ENCODE measurements at regions of chr18 and their contacts with region 1.

Region 1: GRCh38 chr18:286515-287310 is 18.9 kb upstream of the THOC1 start:
- DNase-seq: no peak
- H3K4me3 ChIP-seq: no peak overlapping the region
- H3K27ac ChIP-seq: no peak overlapping the region
- H3K4me1 ChIP-seq: no peaks in the 10 kb centered on the region
- H3K27me3 ChIP-seq: peaks cover 17% of the 10 kb centered on the region
- CTCF ChIP-seq: peak; percentile 69

Region 2: GRCh38 chr18:415617-416612 is 129.2 kb after region 1 on chr18:
- intact Hi-C with region 1: no loop called
- DNase-seq: no peak
- H3K4me3 ChIP-seq: no peak overlapping the region
- H3K27ac ChIP-seq: no peak overlapping the region
- H3K4me1 ChIP-seq: peaks cover 9% of the 10 kb centered on the region
- H3K27me3 ChIP-seq: no peaks in the 10 kb centered on the region
- CTCF ChIP-seq: no peak

Region 3: GRCh38 chr18:616380-616995 is 329.8 kb after region 1 on chr18:
- intact Hi-C with region 1: loop called (anchors 5 kb)
- DNase-seq: no peak
- H3K4me3 ChIP-seq: no peak overlapping the region
- H3K27ac ChIP-seq: no peak overlapping the region
- H3K4me1 ChIP-seq: no peaks in the 10 kb centered on the region
- H3K27me3 ChIP-seq: peaks cover 7% of the 10 kb centered on the region
- CTCF ChIP-seq: peak; percentile 80